A673 (cell line): ENCODE measurements at regions of chr14 and their contacts with region 1.

Region 1: DNA sequence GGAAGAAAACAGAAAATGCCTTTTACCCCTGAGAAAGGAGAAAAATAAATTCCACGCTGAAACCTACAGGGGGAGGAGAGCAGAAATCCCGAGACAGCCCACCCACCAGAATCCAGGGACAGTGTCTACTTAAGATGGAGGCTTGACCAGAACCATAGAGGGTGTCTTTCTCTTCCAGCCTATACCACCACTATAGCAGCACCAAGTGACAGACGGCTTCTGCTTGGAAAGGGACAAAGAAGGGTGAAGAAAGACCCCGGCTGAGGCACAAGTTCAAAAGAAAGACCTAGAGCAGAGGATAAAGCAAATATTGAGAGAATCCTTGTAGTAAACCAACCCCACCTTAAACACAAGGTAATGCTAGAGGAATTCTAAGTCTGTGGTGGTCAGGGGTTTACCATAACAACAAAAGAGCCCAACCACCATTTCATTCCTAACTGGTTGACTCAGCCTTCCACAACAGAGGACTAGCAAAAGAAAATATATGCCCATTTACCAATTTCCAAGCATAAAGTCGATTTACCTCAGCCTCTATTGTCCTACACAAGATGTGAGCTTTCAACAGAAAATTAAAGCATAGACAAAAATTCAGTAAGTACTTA is 105.3 kb upstream of the FOXG1 start:
- DNase-seq: no peak
- H3K4me3 ChIP-seq: no peak overlapping the region
- H3K27ac ChIP-seq: no peak overlapping the region
- H3K4me1 ChIP-seq: no peaks in the 10 kb centered on the region
- H3K27me3 ChIP-seq: no peaks in the 10 kb centered on the region
- CTCF ChIP-seq: no peak

Region 2: GRCh38 chr14:28375295-28375694 is 286.0 kb before region 1 on chr14:
- CTCF ChIA-PET with region 1: interaction called, 12 read pairs
- POLR2A ChIA-PET with region 1: no interaction called
- intact Hi-C with region 1: no loop called
- DNase-seq: peak; percentile 44
- H3K4me3 ChIP-seq: no peak overlapping the region
- H3K27ac ChIP-seq: no peak overlapping the region
- H3K4me1 ChIP-seq: no peaks in the 10 kb centered on the region
- H3K27me3 ChIP-seq: no peaks in the 10 kb centered on the region
- CTCF ChIP-seq: peak; percentile 49

Region 3: DNA sequence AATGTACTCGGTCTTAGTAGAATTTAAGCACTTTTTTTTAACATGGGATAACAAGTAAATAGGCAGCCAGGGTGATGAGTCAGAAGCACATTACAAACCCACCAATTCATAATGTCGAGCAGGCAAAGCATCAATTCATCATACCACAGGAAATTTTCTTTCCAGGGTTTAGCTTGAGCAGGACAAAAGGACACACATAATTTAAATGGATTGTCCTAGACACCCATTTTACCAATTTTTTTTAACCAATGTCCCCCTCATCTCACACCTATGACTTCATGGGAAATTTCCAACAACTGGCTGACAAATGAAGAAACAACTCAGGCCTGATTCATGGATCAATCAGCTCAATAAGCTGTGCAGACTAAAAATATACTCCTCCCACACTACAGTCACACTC is 46.5 kb after region 1 on chr14:
- CTCF ChIA-PET with region 1: no interaction called
- POLR2A ChIA-PET with region 1: no interaction called
- intact Hi-C with region 1: no loop called
- DNase-seq: no peak
- H3K4me3 ChIP-seq: no peak overlapping the region
- H3K27ac ChIP-seq: no peak overlapping the region
- H3K4me1 ChIP-seq: no peaks in the 10 kb centered on the region
- H3K27me3 ChIP-seq: no peaks in the 10 kb centered on the region
- CTCF ChIP-seq: no peak

Region 4: GRCh38 chr14:29168144-29168543 is 506.9 kb after region 1 on chr14:
- CTCF ChIA-PET with region 1: no interaction called
- POLR2A ChIA-PET with region 1: interaction called, 19 read pairs
- intact Hi-C with region 1: no loop called
- DNase-seq: no peak
- H3K4me3 ChIP-seq: no peak overlapping the region
- H3K27ac ChIP-seq: no peak overlapping the region
- H3K4me1 ChIP-seq: no peaks in the 10 kb centered on the region
- H3K27me3 ChIP-seq: no peaks in the 10 kb centered on the region
- CTCF ChIP-seq: no peak